ENCODE measurements at regions of chr6 and their contacts with region 1.

Region 1: DNA sequence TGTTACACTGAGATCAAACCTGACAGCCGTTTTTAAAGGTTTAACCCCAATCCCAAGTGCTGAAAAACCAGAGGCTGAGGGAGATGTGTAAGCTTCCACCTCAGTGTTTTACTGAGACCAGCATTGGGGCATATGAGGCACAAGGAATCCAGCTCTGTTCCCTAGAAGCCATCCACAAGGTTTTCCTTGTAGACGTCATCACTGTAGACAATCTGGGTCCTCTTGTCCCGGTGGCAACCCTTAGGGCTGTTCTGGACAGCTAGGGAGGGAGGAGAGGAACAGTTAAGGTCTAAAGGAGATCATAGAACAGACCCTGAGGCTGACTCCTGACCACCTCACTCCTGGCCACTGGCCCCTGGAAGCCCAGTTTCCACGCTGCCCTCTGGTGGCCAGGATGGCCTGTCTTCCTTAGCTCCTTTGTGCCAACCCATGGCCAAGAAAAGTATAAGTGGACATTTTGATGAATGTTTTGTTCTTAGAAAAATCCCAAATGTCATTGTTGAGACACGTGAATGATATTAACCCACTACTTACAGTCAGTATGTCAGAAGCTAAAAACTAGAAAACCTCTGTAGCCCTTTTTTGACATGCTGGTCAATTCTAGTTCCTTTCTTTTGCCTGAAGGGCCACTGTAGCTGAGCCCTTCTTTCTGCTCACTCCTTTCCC is 6.4 kb downstream of the CFB start:
- DNase-seq: peak; percentile 59
- H3K4me3 Mint-ChIP-seq: no peak overlapping the region
- H3K27ac Mint-ChIP-seq: peak overlapping the region; percentile 20
- H3K4me1 Mint-ChIP-seq: peaks cover 4% of the 10 kb centered on the region
- H3K27me3 Mint-ChIP-seq: no peaks in the 10 kb centered on the region

Region 2: DNA sequence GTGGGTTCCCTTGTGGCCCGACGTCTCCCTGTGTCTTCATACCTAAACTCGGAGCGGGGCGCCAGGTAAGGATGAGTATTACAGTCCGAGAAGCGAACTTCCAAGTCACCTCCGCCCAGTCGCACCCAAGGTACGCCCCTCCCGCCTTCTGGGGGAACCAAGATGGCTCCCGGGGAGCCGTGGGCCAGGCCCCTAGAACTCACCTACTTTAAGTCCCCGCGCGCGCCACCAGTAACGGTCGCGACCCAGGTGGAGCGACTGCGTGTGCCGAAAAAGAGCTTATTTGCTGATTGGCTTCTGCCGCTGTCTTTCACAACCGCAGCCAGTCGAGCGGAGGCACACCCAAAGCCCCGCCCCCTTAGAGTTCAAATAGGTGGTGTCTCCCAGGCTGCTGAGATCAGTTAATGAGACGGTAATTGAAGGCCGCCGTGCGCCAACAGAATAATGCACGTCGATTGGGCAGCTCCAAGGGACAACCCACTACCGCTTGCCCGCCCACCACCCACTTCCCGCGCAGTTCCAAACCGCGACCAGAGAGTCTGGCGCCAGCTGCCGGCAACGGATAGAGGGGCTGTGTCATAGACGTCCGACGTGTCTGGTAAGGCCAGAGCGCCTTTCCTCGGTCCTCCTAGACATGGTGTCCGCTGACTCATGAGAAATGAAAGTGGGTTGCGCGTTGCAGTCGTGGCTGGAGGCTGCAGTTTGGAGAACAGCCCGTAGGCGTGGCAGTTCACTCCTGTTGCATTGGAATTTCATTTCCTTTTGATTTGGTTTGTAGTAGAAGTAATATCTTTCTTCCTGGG is 1235.0 kb before region 1 on chr6 and contains the start of gene MDC1:
- CTCF ChIA-PET with region 1: no interaction called
- POLR2A ChIA-PET with region 1: no interaction called
- intact Hi-C with region 1: no loop called
- DNase-seq: peak; percentile 100
- H3K4me3 Mint-ChIP-seq: peak within 1 kb of the TSS; percentile 92
- H3K27ac Mint-ChIP-seq: peak within 1 kb of the TSS; percentile 99
- H3K4me1 Mint-ChIP-seq: peaks cover 41% of the 10 kb centered on the region
- H3K27me3 Mint-ChIP-seq: no peaks in the 10 kb centered on the region
- total RNA-seq, gene MDC1: 79.5 to 88.7 TPM

Region 3: GRCh38 chr6:31680840-31681671 is 271.2 kb before region 1 on chr6 and contains the start of gene LY6G5C:
- CTCF ChIA-PET with region 1: interaction called, 4 read pairs
- POLR2A ChIA-PET with region 1: no interaction called
- intact Hi-C with region 1: loop called (anchors 5 kb)
- DNase-seq: peak; percentile 82
- H3K4me3 Mint-ChIP-seq: peak within 1 kb of the TSS; percentile 76
- H3K27ac Mint-ChIP-seq: peak within 1 kb of the TSS; percentile 44
- H3K4me1 Mint-ChIP-seq: peaks cover 15% of the 10 kb centered on the region
- H3K27me3 Mint-ChIP-seq: no peaks in the 10 kb centered on the region
- total RNA-seq, gene LY6G5C: 1.4 to 1.8 TPM

Region 4: GRCh38 chr6:31815025-31815838 is 137.0 kb before region 1 on chr6 and contains the starts of genes HSPA1A and HSPA1L:
- CTCF ChIA-PET with region 1: no interaction called
- POLR2A ChIA-PET with region 1: no interaction called
- intact Hi-C with region 1: no loop called
- DNase-seq: peak; percentile 82
- H3K4me3 Mint-ChIP-seq: peak within 1 kb of the TSS; percentile 85
- H3K27ac Mint-ChIP-seq: peak within 1 kb of the TSS; percentile 95
- H3K4me1 Mint-ChIP-seq: peaks cover 57% of the 10 kb centered on the region
- H3K27me3 Mint-ChIP-seq: no peaks in the 10 kb centered on the region
- total RNA-seq, gene HSPA1A: 68.5 to 69.9 TPM
- total RNA-seq, gene HSPA1L: 2.0 TPM

Region 5: GRCh38 chr6:31897612-31898382 is 54.5 kb before region 1 on chr6 and contains the start of gene EHMT2:
- CTCF ChIA-PET with region 1: interaction called, 18 read pairs
- POLR2A ChIA-PET with region 1: interaction called, 15 read pairs
- intact Hi-C with region 1: no loop called
- DNase-seq: peak; percentile 91
- H3K4me3 Mint-ChIP-seq: peak within 1 kb of the TSS; percentile 94
- H3K27ac Mint-ChIP-seq: peak within 1 kb of the TSS; percentile 94
- H3K4me1 Mint-ChIP-seq: peaks cover 34% of the 10 kb centered on the region
- H3K27me3 Mint-ChIP-seq: no peaks in the 10 kb centered on the region
- total RNA-seq, gene EHMT2: 45.5 to 46.0 TPM

Region 6: GRCh38 chr6:32369675-32370074 is 417.4 kb after region 1 on chr6:
- CTCF ChIA-PET with region 1: no interaction called
- POLR2A ChIA-PET with region 1: no interaction called
- intact Hi-C with region 1: no loop called
- DNase-seq: peak; percentile 47
- H3K4me3 Mint-ChIP-seq: no peak overlapping the region
- H3K27ac Mint-ChIP-seq: no peak overlapping the region
- H3K4me1 Mint-ChIP-seq: peaks cover 8% of the 10 kb centered on the region
- H3K27me3 Mint-ChIP-seq: peaks cover 34% of the 10 kb centered on the region